ENCODE measurements at regions of chr4 and their contacts with region 1.

Region 1: GRCh38 chr4:1579901-1580691 is 104.0 kb downstream of the FAM53A start:
- DNase-seq: peak; percentile 73
- H3K4me3 Mint-ChIP-seq: peak overlapping the region; percentile 49
- H3K27ac Mint-ChIP-seq: no peak overlapping the region
- H3K4me1 Mint-ChIP-seq: no peaks in the 10 kb centered on the region
- H3K27me3 Mint-ChIP-seq: peaks cover 2% of the 10 kb centered on the region

Region 2: DNA sequence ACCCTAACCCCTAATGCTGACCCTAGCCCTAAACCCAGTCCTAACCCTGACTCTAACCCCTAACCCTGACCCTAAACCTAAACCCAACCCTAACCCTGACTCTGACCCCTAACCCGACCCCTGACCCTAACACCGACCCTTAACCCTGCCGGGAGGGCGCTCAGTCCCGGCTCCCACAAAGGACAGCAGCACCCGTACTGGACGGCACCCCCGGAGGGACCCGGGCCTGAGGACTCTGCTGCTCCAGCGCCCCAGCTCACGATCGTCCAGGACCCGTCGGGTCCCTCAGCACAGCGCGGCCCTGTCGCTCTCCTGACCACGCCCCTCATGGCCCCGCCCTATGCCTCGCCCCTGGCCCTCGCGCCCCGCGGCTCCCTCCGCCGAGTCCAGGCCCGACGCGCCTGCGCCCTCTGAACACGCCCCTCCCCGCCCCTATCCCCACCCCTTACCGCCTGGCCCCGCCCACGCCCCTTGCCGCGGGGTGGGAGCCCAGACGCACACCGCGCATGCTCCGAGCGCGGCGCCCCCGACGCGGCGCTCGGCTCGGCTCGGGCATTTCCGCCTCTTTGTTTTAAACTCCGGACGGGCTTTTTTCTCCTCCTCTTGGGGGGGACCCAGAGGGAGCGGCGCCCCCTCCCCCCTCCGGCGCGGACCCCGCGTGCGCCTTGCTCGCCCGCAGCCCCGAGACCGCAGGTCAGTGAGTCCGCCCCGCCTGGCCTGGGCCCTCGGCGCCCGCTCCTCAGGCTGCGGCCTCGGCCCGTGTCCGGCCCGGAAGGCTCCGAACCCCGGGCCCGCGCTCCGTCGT is 874.6 kb before region 1 on chr4 and contains the start of gene PCGF3:
- intact Hi-C with region 1: loop called (anchors 2 kb)
- DNase-seq: peak; percentile 95
- H3K4me3 Mint-ChIP-seq: peak within 1 kb of the TSS; percentile 83
- H3K27ac Mint-ChIP-seq: peak within 1 kb of the TSS; percentile 83
- H3K4me1 Mint-ChIP-seq: peaks cover 27% of the 10 kb centered on the region
- H3K27me3 Mint-ChIP-seq: peaks cover 2% of the 10 kb centered on the region
- total RNA-seq, gene PCGF3: 30.4 and 31.0 TPM in 2 replicates

Region 3: DNA sequence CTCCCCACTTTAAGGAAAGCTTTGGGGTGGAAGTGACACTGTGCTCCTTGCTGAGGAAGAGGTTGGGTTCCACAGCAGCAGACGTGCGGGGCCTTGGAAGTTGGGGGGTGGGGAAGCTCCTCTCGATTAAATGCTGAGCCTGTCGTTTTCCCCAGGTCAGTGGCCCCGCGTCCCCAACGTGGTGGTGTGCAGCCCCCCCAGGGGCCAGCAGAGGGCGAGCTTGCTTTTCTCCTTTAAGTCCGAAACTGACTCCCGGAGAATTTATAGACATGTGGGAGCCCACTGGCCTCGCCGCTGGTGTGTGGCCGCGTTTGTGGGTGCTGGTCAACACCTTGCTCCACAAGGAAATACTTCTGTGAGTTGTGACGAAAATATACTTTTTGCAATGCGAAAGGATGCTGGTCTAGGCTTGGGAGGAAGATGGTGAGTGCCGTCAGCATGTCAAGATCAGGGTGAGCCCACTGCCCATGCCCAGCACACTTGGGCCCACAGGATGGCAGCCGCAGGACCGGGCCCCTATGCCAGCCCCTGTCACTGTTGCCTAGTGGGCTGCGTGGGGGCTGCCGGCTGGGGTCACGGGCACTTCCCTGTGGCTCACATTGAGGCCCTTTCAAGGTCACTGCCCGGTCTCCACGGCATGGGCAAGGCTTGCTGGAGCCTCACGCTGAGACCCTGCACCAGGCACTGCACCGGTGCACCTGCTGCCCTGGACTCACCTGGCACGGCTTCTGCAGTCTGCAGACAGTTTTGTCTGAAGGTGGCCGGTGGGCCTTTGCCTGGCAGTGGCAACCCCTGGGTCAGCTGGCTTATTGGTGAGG is 223.7 kb before region 1 on chr4:
- intact Hi-C with region 1: no loop called
- DNase-seq: no peak
- H3K4me3 Mint-ChIP-seq: no peak overlapping the region
- H3K27ac Mint-ChIP-seq: no peak overlapping the region
- H3K4me1 Mint-ChIP-seq: peaks cover 7% of the 10 kb centered on the region
- H3K27me3 Mint-ChIP-seq: no peaks in the 10 kb centered on the region

Region 4: DNA sequence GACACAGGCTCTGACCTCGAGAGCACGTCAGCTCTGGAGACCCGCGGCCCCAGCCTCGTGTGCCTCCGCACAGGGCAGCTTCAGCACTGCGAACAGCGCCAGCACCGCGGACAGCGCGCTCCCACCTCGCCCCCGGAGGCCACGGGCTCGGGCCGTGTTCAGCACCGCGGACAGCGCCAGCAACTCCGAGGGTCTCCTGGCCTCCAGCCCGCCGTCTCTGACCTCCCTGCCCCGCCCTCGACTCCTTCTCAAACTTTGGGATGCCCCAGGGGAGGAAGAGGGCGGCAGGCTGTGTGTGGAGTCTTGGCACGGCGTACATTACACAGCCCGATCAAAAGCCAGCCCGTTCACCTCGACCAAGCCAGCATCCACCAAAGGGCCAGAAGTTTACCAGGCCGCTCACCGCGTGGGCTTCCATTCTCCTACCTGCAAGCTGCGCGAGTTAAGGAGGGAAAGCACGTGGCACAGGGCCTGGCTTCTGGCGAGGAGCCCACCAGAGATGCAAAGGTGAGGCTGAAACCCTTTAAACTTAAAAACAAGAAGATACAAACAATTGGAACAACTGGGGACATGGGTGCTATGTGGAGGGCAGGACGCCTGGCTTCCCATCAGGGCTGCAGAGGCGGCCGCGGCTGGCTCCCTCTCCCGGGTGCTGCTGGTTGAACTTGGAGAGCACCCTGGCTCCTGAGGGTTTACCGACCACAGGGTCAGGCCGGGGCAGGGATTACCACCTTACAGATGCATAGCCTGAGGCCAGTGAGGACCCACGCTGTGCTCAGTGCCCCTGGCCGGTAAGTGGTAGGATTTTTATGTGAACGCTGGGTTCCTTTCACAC is 169.4 kb before region 1 on chr4:
- intact Hi-C with region 1: no loop called
- DNase-seq: no peak
- H3K4me3 Mint-ChIP-seq: no peak overlapping the region
- H3K27ac Mint-ChIP-seq: no peak overlapping the region
- H3K4me1 Mint-ChIP-seq: no peaks in the 10 kb centered on the region
- H3K27me3 Mint-ChIP-seq: peaks cover 29% of the 10 kb centered on the region

Region 5: GRCh38 chr4:1567803-1568581 is 12.1 kb before region 1 on chr4:
- intact Hi-C with region 1: loop called (anchors 2 kb)
- DNase-seq: no peak
- H3K4me3 Mint-ChIP-seq: no peak overlapping the region
- H3K27ac Mint-ChIP-seq: no peak overlapping the region
- H3K4me1 Mint-ChIP-seq: no peaks in the 10 kb centered on the region
- H3K27me3 Mint-ChIP-seq: no peaks in the 10 kb centered on the region

Region 6: GRCh38 chr4:1683736-1684505 is 103.8 kb after region 1 on chr4 and contains the start of gene FAM53A:
- intact Hi-C with region 1: loop called (anchors 1 kb)
- DNase-seq: peak; percentile 93
- H3K4me3 Mint-ChIP-seq: peak within 1 kb of the TSS; percentile 87
- H3K27ac Mint-ChIP-seq: peak within 1 kb of the TSS; percentile 90
- H3K4me1 Mint-ChIP-seq: peaks cover 12% of the 10 kb centered on the region
- H3K27me3 Mint-ChIP-seq: peaks cover 2% of the 10 kb centered on the region
- total RNA-seq, gene FAM53A: 2.5 and 5.5 TPM in 2 replicates

Region 7: DNA sequence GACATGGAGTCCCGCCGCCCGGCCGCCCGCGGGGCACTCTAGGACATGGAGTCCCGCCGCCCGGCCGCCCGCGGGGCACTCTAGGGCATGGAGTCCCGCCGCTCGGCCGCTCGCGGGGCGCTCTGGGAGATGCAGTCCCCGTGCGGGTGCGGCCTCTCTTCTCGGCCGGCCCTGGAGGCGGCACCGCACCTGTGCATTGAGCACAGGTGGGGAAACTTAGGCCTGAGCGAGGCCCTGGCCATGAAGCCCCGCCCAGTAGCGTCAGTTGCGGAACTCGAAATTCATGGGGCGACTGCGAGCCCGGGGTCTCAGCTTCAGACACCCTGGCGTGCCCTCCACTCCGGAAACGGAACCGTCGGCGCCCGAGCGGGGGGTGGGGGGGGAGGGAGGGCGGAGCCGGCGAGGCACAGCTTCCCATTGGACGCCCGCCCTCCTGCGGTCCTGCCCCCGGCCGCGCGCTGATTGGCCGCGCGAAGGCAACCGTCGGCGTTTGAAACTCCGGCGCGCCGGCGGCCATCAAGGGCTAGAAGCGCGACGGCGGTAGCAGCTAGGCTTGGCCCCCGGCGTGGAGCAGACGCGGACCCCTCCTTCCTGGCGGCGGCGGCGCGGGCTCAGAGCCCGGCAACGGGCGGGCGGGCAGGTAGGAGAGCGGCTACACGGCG is 141.0 kb after region 1 on chr4 and contains the starts of genes TACC3 and TMEM129:
- intact Hi-C with region 1: loop called (anchors 5 kb)
- DNase-seq: peak; percentile 90
- H3K4me3 Mint-ChIP-seq: peak within 1 kb of the TSS; percentile 94
- H3K27ac Mint-ChIP-seq: peak within 1 kb of the TSS; percentile 97
- H3K4me1 Mint-ChIP-seq: peaks cover 45% of the 10 kb centered on the region
- H3K27me3 Mint-ChIP-seq: no peaks in the 10 kb centered on the region
- total RNA-seq, gene TACC3: 134 and 139 TPM in 2 replicates
- total RNA-seq, gene TMEM129: 27.4 and 28.4 TPM in 2 replicates

Region 8: DNA sequence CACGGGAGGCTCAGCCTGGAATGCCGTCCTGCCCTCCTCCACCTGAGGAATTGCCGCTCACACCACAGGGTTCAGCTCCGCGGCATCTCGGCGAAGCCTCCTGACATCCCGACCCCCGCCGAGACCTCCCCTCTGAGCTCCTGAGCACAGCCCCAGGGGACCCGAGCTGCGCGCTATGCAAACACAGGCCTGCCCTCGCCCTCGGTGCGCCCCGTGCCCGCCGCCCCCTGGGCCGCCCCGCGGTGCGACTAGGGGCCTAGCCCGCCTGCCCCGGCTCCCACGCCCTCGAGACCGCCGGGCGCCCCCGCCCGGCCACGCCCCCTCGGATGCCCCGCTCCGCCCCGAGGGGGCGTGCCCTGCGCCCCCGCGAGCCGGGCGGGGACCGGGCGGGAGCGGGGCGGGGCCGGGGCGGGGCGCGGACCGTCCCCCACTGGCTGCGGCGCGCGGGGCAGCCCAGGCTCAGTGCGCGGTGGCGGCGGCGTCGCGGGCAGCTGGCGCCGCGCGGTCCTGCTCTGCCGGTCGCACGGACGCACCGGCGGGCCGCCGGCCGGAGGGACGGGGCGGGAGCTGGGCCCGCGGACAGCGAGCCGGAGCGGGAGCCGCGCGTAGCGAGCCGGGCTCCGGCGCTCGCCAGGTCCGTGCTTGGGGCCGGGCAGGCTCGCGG is 212.9 kb after region 1 on chr4 and contains the start of gene FGFR3:
- intact Hi-C with region 1: loop called (anchors 2 kb)
- DNase-seq: peak; percentile 28
- H3K4me3 Mint-ChIP-seq: peak within 1 kb of the TSS; percentile 37
- H3K27ac Mint-ChIP-seq: no peak within 1 kb of the TSS
- H3K4me1 Mint-ChIP-seq: no peaks in the 10 kb centered on the region
- H3K27me3 Mint-ChIP-seq: peaks cover 31% of the 10 kb centered on the region
- total RNA-seq, gene FGFR3: 0.29 and 0.39 TPM in 2 replicates

Region 9: DNA sequence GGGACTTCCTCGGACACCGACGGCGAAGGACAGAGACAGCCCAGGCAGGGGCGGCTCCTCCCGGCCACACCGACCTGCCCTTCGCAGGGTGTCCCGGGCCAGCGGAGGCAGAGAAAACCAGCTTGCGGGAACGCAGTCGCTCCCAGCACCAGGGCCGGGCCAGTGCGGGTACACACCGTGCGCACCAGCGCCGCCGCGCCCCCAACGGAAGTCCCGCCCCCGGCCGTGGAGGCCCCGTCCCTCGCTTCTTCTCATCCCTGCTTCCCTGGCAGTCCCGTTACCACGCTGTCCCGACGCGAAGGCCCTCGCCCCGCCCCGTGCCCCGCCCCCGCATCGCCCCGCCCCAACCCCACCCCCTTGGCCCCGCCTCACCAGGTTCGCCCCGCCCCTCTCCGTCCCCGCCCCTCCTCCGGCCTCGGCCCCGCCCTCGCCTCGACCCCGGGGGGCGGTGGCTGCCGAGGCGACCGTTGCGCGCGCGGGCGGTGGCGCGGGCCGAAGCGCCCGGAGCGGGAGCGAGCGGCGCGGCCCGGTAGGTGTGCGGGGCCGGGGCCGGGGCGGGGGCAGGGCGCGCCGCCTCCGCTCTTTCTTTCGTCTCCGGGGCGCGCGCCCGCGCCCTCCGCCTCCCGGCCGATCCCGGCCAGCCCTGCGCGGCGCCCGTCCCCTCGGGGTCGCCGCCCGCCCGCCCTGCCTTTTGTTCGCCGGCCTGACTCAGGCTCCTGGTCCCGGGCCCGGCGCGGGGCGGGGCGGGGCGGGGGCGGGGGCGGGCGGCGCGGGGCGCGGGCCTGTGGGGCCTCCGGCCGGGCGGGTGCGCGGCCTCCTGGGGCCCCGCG is 1712.7 kb after region 1 on chr4 and contains the start of gene RGS12:
- intact Hi-C with region 1: loop called (anchors 5 kb)
- DNase-seq: peak; percentile 80
- H3K4me3 Mint-ChIP-seq: peak within 1 kb of the TSS; percentile 83
- H3K27ac Mint-ChIP-seq: peak within 1 kb of the TSS; percentile 72
- H3K4me1 Mint-ChIP-seq: peaks cover 6% of the 10 kb centered on the region
- H3K27me3 Mint-ChIP-seq: peaks cover 50% of the 10 kb centered on the region
- total RNA-seq, gene RGS12: 3.1 and 3.6 TPM in 2 replicates

Measured in activated T-helper 1 cell treated with anti-CD3 and anti-CD28 coated beads, Interleukin-12 subunit alpha, Interleukin-12 subunit beta, Interleukin-2, Interleukin-4 antibody, amounts not matched to agents 30 ng/mL and 10 ng/mL and 1 ng/mL, durations not matched to agents 14 hours and 24 hours and 36 hours (primary cell).